ENCODE measurements at regions of chr2 and their contacts with region 1.

Region 1: GRCh38 chr2:176814306-176815052 is 398.1 kb upstream of the HNRNPA3 start:
- DNase-seq: no peak
- H3K4me3 Mint-ChIP-seq: no peak overlapping the region
- H3K27ac Mint-ChIP-seq: no peak overlapping the region
- H3K4me1 Mint-ChIP-seq: peaks cover 4% of the 10 kb centered on the region
- H3K27me3 Mint-ChIP-seq: peaks cover 9% of the 10 kb centered on the region

Region 2: GRCh38 chr2:176653479-176654443 is 160.7 kb before region 1 on chr2:
- intact Hi-C with region 1: loop called (anchors 2 kb)
- DNase-seq: peak; percentile 11
- H3K4me3 Mint-ChIP-seq: no peak overlapping the region
- H3K27ac Mint-ChIP-seq: no peak overlapping the region
- H3K4me1 Mint-ChIP-seq: peaks cover 12% of the 10 kb centered on the region
- H3K27me3 Mint-ChIP-seq: peaks cover 52% of the 10 kb centered on the region

Region 3: GRCh38 chr2:177332041-177332991 is 517.8 kb after region 1 on chr2:
- intact Hi-C with region 1: no loop called
- DNase-seq: peak; percentile 36
- H3K4me3 Mint-ChIP-seq: no peak overlapping the region
- H3K27ac Mint-ChIP-seq: no peak overlapping the region
- H3K4me1 Mint-ChIP-seq: peaks cover 14% of the 10 kb centered on the region
- H3K27me3 Mint-ChIP-seq: no peaks in the 10 kb centered on the region